ENCODE measurements at regions of chr7 and their contacts with region 1.

Region 1: GRCh38 chr7:132250883-132251653 is 325.2 kb downstream of the PLXNA4 start:
- DNase-seq: no peak
- H3K4me3 ChIP-seq: no peak overlapping the region
- H3K27ac ChIP-seq: no peak overlapping the region
- H3K4me1 ChIP-seq: no peaks in the 10 kb centered on the region
- H3K27me3 ChIP-seq: peaks cover 18% of the 10 kb centered on the region

Region 2: GRCh38 chr7:131688738-131689661 is 562.1 kb before region 1 on chr7:
- in situ Hi-C with region 1: loop called (anchors 25 kb)
- DNase-seq: peak; percentile 68
- H3K4me3 ChIP-seq: no peak overlapping the region
- H3K27ac ChIP-seq: no peak overlapping the region
- H3K4me1 ChIP-seq: no peaks in the 10 kb centered on the region
- H3K27me3 ChIP-seq: peaks cover 5% of the 10 kb centered on the region; the same call in 1 of the 2 replicates

Measured in GM23248 (cell line).